OCI-LY7 (cell line): ENCODE measurements at regions of chr10 and their contacts with region 1.

Region 1: DNA sequence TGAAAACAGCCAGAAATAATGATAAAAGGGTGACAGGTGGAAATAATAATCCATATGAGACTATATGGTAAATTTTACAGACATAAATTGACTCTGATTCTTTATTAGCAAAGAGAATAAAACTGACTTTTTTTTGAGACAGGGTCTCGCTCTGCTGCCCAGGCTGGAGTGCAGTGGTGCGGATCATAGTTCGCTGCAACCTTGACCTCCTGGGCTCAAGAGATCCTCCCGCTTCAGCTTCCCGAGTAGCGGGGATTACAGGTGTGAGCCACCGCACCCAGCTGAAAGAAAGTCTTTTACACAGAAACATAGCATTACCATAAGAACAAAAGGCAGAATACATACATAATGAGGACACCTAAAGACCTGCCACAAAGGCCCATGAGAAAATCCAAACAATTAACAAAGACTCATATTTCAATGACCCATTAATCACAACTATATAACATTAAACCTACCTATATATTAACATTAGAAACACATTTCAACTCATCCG is 51.5 kb upstream of the DIP2C start:
- DNase-seq: no peak
- H3K4me3 ChIP-seq: no peak overlapping the region
- H3K27ac ChIP-seq: no peak overlapping the region
- H3K4me1 ChIP-seq: no peaks in the 10 kb centered on the region
- CTCF ChIP-seq: no peak

Region 2: DNA sequence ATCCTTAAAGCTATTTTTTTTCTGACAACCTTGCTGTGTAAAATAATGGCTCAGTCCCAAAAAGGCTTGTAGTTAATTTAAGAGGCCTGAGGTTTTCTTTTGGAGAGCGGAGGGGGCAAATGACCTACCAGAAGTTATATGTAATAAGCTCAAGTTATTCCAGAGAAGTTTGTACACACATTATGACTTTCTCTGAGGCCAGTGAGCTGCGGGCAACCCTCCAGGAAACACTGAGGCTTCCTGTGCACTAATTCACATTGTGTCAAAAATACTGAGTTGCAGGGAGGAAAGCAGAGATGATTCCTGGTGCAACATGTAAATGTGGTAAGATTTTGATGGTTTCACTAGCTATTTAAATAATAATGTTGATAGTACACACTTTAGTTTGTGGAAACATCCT is 240.1 kb before region 1 on chr10:
- CTCF ChIA-PET with region 1: no interaction called
- POLR2A ChIA-PET with region 1: no interaction called
- intact Hi-C with region 1: no loop called
- DNase-seq: no peak
- H3K4me3 ChIP-seq: no peak overlapping the region
- H3K27ac ChIP-seq: no peak overlapping the region
- H3K4me1 ChIP-seq: peaks cover 23% of the 10 kb centered on the region
- CTCF ChIP-seq: no peak

Region 3: DNA sequence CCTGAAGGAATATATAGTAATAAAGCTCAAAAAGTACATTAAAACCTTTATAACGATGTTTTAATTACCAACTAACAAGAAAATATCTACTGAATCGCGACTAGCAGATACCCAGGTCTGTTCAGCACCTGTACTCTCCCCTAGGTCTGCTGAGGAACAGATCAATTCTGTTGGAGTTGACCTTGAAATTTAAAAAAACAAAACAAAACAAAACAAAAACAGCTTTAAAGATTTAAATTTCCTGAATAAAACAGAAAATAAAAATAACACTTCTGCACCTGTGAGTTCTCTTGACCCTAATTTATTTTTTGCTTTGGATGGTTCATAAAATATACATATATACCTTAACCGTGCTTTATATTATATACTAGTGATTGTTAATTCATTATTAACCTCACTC is 76.1 kb before region 1 on chr10:
- CTCF ChIA-PET with region 1: interaction called, 12 read pairs
- POLR2A ChIA-PET with region 1: no interaction called
- intact Hi-C with region 1: no loop called
- DNase-seq: no peak
- H3K4me3 ChIP-seq: no peak overlapping the region
- H3K27ac ChIP-seq: no peak overlapping the region
- H3K4me1 ChIP-seq: peaks cover 3% of the 10 kb centered on the region
- CTCF ChIP-seq: no peak

Region 4: GRCh38 chr10:964321-964987 is 223.5 kb after region 1 on chr10:
- CTCF ChIA-PET with region 1: no interaction called
- POLR2A ChIA-PET with region 1: no interaction called
- intact Hi-C with region 1: no loop called
- DNase-seq: no peak
- H3K4me3 ChIP-seq: no peak overlapping the region
- H3K27ac ChIP-seq: no peak overlapping the region
- H3K4me1 ChIP-seq: no peaks in the 10 kb centered on the region
- CTCF ChIP-seq: no peak